ENCODE measurements at regions of chr18 and their contacts with region 1.

Region 1: GRCh38 chr18:10032331-10033015 is 118.7 kb downstream of the VAPA start:
- DNase-seq: peak; percentile 52
- ATAC-seq: peak; percentile 94
- H3K4me3 Mint-ChIP-seq: peak overlapping the region; percentile 81
- H3K27ac Mint-ChIP-seq: peak overlapping the region; percentile 68
- H3K4me1 Mint-ChIP-seq: peaks cover 11% of the 10 kb centered on the region
- H3K27me3 Mint-ChIP-seq: no peaks in the 10 kb centered on the region
- CTCF ChIP-seq: no peak

Region 2: GRCh38 chr18:10490401-10491165 is 458.1 kb after region 1 on chr18:
- CTCF ChIA-PET with region 1: interaction called, 7 read pairs
- POLR2A ChIA-PET with region 1: no interaction called
- intact Hi-C with region 1: loop called (anchors 1 kb)
- DNase-seq: peak; percentile 53
- ATAC-seq: peak; percentile 100
- H3K4me3 Mint-ChIP-seq: no peak overlapping the region
- H3K27ac Mint-ChIP-seq: peak overlapping the region; percentile 72
- H3K4me1 Mint-ChIP-seq: peaks cover 25% of the 10 kb centered on the region
- H3K27me3 Mint-ChIP-seq: no peaks in the 10 kb centered on the region
- CTCF ChIP-seq: no peak

Region 3: DNA sequence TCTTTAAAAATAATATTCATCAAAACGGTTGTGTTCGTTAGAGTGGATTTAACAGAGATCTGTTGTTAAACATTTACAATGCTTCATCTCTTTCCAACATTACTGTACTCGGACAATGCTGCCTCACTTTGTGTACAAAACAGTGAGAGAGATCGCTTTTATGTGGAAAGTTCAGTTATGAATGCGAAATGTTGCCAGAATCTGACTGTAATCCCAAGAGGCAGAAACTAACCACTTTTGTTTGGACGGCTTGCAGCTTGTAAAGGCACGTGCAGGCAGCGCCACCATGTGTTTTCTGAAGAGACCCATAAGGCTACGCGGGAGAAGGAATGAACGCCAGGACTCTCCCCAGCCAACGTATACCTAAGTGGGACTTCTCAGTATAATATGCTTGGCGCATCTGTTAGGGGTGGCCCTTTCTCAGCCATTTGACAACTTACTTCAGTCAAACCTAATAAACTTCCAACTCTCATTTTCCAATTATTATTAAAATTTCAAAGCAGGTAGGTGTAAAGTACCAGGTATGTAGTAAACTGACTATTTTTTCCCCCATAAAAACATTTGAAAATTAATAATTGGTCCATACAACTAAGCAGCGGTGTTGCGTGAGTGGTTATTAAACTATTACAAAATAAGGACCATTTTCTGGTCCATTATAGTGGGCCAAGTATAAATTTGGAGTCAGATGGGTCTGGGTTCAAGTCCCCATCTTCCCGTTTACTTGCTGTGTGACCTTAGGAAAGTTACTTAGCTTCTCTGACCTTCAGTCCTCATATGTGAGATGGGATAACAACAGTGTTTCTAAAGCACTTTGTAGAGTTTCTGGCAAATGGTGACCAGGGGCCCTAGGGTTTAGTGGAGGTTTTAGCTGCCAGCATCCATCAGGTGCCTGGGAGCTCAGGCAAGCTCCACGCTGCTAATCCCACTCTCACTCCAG is 487.8 kb after region 1 on chr18:
- CTCF ChIA-PET with region 1: interaction called, 13 read pairs
- POLR2A ChIA-PET with region 1: interaction called, 3 read pairs
- intact Hi-C with region 1: loop called (anchors 1 kb)
- DNase-seq: peak; percentile 37
- ATAC-seq: peak; percentile 94
- H3K4me3 Mint-ChIP-seq: no peak overlapping the region
- H3K27ac Mint-ChIP-seq: no peak overlapping the region
- H3K4me1 Mint-ChIP-seq: peaks cover 13% of the 10 kb centered on the region
- H3K27me3 Mint-ChIP-seq: peaks cover 12% of the 10 kb centered on the region
- CTCF ChIP-seq: no peak

Region 4: DNA sequence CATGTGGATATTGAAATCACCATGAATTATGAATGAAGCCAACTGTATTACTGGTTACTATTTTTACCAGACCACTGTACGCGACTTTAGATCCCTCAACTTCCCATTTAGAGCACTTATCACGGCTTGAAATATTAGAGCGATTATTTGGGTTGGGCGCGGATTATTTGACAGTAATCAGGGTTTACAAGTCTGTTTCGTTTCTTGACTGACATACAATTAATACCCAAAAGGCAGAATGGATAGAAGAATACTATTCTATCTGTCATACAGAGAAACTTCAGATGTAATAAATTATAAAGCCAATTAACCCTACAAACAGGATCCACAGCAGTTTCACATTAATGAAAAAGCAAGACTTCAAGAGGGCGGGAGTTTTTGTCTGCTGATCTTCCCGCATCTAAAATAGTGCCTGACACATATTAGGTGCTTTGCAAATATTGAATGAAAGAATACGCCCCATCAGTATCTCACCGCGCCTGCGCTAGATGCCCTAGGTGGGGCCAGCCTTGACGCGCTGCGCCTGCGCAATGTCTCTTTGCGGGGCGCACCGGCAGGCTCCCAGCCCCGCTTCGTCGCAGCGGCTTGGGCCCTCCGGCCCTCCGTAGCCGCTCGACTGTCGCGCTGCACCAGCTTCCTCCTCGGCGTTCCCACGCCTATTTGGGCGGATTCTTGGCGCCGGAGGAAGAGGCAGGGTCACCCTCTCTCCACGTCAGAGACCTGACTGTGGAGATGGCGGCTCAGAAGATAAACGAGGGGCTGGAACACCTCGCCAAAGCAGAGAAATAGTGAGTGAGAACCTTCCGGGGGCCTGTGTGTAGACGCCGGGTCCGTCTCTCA is 493.1 kb after region 1 on chr18 and contains the start of gene NAPG:
- CTCF ChIA-PET with region 1: interaction called, 12 read pairs
- POLR2A ChIA-PET with region 1: no interaction called
- intact Hi-C with region 1: loop called (anchors 1 kb)
- DNase-seq: peak; percentile 86
- ATAC-seq: peak; percentile 91
- H3K4me3 Mint-ChIP-seq: peak within 1 kb of the TSS; percentile 99
- H3K27ac Mint-ChIP-seq: peak within 1 kb of the TSS; percentile 96
- H3K4me1 Mint-ChIP-seq: peaks cover 49% of the 10 kb centered on the region
- H3K27me3 Mint-ChIP-seq: no peaks in the 10 kb centered on the region
- CTCF ChIP-seq: no peak
- total RNA-seq, gene NAPG: 24.5 and 33.3 TPM in 2 replicates